A549 (cell line): ENCODE measurements at regions of chr1 and their contacts with region 1.

Region 1: GRCh38 chr1:18581420-18581880 is 49.2 kb upstream of the PAX7 start:
- DNase-seq: peak; percentile 37 to 55
- ATAC-seq: peak; percentile 67 to 90; a peak in 5 of 6 replicates
- H3K4me3 ChIP-seq: no peak overlapping the region
- H3K27ac ChIP-seq: no peak overlapping the region
- H3K4me1 ChIP-seq: no peaks in the 10 kb centered on the region
- CTCF ChIP-seq: peak; percentile 70
- EP300 ChIP-seq: no peak
- POLR2A ChIP-seq: no peak
- RAD21 ChIP-seq: peak; percentile 85 to 87

Region 2: GRCh38 chr1:17653728-17654351 is 927.6 kb before region 1 on chr1:
- CTCF ChIA-PET with region 1: interaction called, 49 read pairs
- POLR2A ChIA-PET with region 1: no interaction called
- DNase-seq: peak; percentile 24 to 50
- ATAC-seq: peak; percentile 83 to 93
- H3K4me3 ChIP-seq: no peak overlapping the region
- H3K27ac ChIP-seq: no peak overlapping the region
- H3K4me1 ChIP-seq: no peaks in the 10 kb centered on the region
- CTCF ChIP-seq: peak; percentile 68
- EP300 ChIP-seq: no peak
- POLR2A ChIP-seq: no peak
- RAD21 ChIP-seq: peak; percentile 67 to 68

Region 3: GRCh38 chr1:17661546-17662157 is 919.8 kb before region 1 on chr1:
- CTCF ChIA-PET with region 1: interaction called, 49 read pairs
- POLR2A ChIA-PET with region 1: no interaction called
- DNase-seq: peak; percentile 40 to 66
- ATAC-seq: peak; percentile 72 to 86
- H3K4me3 ChIP-seq: no peak overlapping the region
- H3K27ac ChIP-seq: no peak overlapping the region
- H3K4me1 ChIP-seq: no peaks in the 10 kb centered on the region
- CTCF ChIP-seq: peak; percentile 72
- EP300 ChIP-seq: no peak
- POLR2A ChIP-seq: no peak
- RAD21 ChIP-seq: peak; percentile 78 to 80

Region 4: GRCh38 chr1:18256282-18257235 is 324.9 kb before region 1 on chr1:
- CTCF ChIA-PET with region 1: no interaction called
- POLR2A ChIA-PET with region 1: no interaction called
- DNase-seq: peak; percentile 11 to 15
- ATAC-seq: peak; percentile 34 to 47; a peak in 1 of 6 replicates
- H3K4me3 ChIP-seq: no peak overlapping the region
- H3K27ac ChIP-seq: no peak overlapping the region
- H3K4me1 ChIP-seq: no peaks in the 10 kb centered on the region
- CTCF ChIP-seq: no peak
- EP300 ChIP-seq: no peak
- POLR2A ChIP-seq: no peak
- RAD21 ChIP-seq: no peak

Region 5: GRCh38 chr1:18299441-18300338 is 281.8 kb before region 1 on chr1:
- CTCF ChIA-PET with region 1: interaction called, 17 read pairs
- POLR2A ChIA-PET with region 1: no interaction called
- DNase-seq: peak; percentile 22 to 47
- ATAC-seq: peak in 1 of 2 experiments; percentile 69; a peak in 3 of 6 replicates
- H3K4me3 ChIP-seq: no peak overlapping the region
- H3K27ac ChIP-seq: no peak overlapping the region
- H3K4me1 ChIP-seq: no peaks in the 10 kb centered on the region
- CTCF ChIP-seq: peak; percentile 44; the same call in 2 of the 3 replicates
- EP300 ChIP-seq: no peak
- POLR2A ChIP-seq: no peak
- RAD21 ChIP-seq: peak; percentile 24 to 34; a peak in 3 of 5 replicates

Region 6: GRCh38 chr1:18529714-18530113 is 51.7 kb before region 1 on chr1:
- CTCF ChIA-PET with region 1: no interaction called
- POLR2A ChIA-PET with region 1: no interaction called
- DNase-seq: no peak
- ATAC-seq: no peak
- H3K4me3 ChIP-seq: no peak overlapping the region
- H3K27ac ChIP-seq: no peak overlapping the region
- H3K4me1 ChIP-seq: no peaks in the 10 kb centered on the region
- CTCF ChIP-seq: no peak
- EP300 ChIP-seq: no peak
- POLR2A ChIP-seq: no peak
- RAD21 ChIP-seq: no peak

Region 7: GRCh38 chr1:18554597-18554996 is 26.9 kb before region 1 on chr1:
- CTCF ChIA-PET with region 1: interaction called, 12 read pairs
- POLR2A ChIA-PET with region 1: interaction called, 3 read pairs
- DNase-seq: no peak
- ATAC-seq: no peak
- H3K4me3 ChIP-seq: no peak overlapping the region
- H3K27ac ChIP-seq: no peak overlapping the region
- H3K4me1 ChIP-seq: peaks cover 4% of the 10 kb centered on the region; the same call in 1 of the 3 replicates
- CTCF ChIP-seq: no peak
- EP300 ChIP-seq: no peak
- POLR2A ChIP-seq: no peak
- RAD21 ChIP-seq: no peak

Region 8: DNA sequence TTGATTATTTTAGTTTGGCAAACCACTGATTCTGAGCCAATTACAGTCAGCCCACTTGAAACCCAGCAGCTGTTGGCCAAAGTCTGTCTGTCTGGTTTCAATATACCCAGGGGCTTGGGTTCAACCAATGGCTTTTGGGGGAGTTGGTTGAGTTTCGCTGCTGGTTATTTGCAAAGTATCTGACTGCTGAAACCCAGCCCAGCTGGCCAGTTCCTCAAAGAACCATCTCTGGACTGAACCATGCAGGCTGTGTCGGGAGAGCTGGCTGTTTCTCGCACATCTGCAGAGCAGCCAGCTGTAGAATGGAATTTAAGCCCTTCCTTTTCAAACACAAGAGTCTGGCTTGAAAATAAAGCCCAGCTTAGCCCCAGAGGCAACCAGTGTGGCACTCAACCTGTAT is 16.8 kb before region 1 on chr1:
- CTCF ChIA-PET with region 1: interaction called, 32 read pairs
- POLR2A ChIA-PET with region 1: no interaction called
- DNase-seq: no peak
- ATAC-seq: no peak
- H3K4me3 ChIP-seq: no peak overlapping the region
- H3K27ac ChIP-seq: no peak overlapping the region
- H3K4me1 ChIP-seq: no peaks in the 10 kb centered on the region
- CTCF ChIP-seq: no peak
- EP300 ChIP-seq: no peak
- POLR2A ChIP-seq: no peak
- RAD21 ChIP-seq: no peak

Region 9: DNA sequence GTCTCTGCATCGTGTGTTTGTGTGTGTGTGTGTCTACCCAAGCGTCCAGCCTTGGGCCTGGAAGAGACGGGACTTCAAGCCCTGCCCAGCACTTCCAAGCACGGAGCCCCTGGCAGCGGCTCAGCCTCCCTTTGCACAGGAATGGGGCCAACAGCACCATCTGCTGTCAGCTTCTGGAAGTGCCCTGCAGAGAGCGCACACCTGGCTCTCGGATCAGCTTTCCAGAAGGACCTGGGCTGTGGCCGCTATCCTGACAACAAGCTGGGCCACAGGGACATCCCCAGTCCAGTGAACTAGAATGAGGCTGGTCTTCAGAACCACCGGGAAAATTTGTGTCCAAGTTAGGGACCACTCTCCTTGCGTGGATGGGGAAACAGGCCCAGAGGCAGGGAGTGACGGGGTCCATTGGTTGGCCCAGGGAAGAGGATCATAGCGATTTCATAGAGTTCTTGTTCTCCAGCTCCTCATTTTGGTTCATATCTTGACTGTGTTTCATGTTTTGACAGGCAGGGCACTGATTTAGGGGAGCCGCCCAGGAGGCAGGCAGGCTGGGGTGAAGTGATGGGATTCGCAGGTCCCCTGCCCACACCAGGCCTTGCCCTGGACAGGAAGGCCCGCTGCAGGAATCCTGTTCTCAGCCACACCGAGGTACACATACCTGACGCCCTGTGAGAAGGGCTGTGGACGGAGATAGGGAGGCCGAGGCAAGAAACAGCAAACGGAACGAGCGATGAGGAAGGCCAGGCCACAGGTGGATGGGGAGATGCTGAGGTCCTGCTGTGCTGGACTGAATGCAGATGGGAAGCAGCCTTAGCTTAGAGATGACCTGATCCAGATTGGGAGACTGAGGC is 239.6 kb after region 1 on chr1:
- CTCF ChIA-PET with region 1: interaction called, 17 read pairs
- POLR2A ChIA-PET with region 1: no interaction called
- DNase-seq: peak; percentile 60
- ATAC-seq: peak; percentile 82 to 96; a peak in 5 of 6 replicates
- H3K4me3 ChIP-seq: no peak overlapping the region
- H3K27ac ChIP-seq: no peak overlapping the region
- H3K4me1 ChIP-seq: no peaks in the 10 kb centered on the region
- CTCF ChIP-seq: peak; percentile 64
- EP300 ChIP-seq: no peak
- POLR2A ChIP-seq: no peak
- RAD21 ChIP-seq: peak; percentile 77 to 80

Region 10: GRCh38 chr1:18866314-18866713 is 284.9 kb after region 1 on chr1:
- CTCF ChIA-PET with region 1: no interaction called
- POLR2A ChIA-PET with region 1: no interaction called
- DNase-seq: no peak
- ATAC-seq: no peak
- H3K4me3 ChIP-seq: no peak overlapping the region
- H3K27ac ChIP-seq: no peak overlapping the region
- H3K4me1 ChIP-seq: no peaks in the 10 kb centered on the region
- CTCF ChIP-seq: no peak
- EP300 ChIP-seq: no peak
- POLR2A ChIP-seq: no peak
- RAD21 ChIP-seq: no peak